HCT116 (cell line): ENCODE measurements at regions of chr19 and their contacts with region 1.

Region 1: GRCh38 chr19:4139614-4140236 is 13.7 kb upstream of the CREB3L3 start:
- DNase-seq: peak; percentile 71
- ATAC-seq: peak; percentile 88
- H3K4me3 ChIP-seq: peak overlapping the region; percentile 32 to 50
- H3K27ac ChIP-seq: peak overlapping the region; percentile 21; the same call in 1 of the 2 replicates
- H3K4me1 ChIP-seq: peaks cover 15 to 40% of the 10 kb centered on the region in 2 experiments
- H3K27me3 ChIP-seq: no peaks in the 10 kb centered on the region
- CTCF ChIP-seq: peak; percentile 76 to 91 (median 91)
- POLR2A ChIP-seq: no peak
- RAD21 ChIP-seq: peak; percentile 69

Region 2: GRCh38 chr19:3984908-3985642 is 154.7 kb before region 1 on chr19 and contains the start of gene EEF2:
- CTCF ChIA-PET with region 1: interaction called, 20 read pairs
- POLR2A ChIA-PET with region 1: no interaction called
- RAD21 ChIA-PET with region 1: no interaction called
- intact Hi-C with region 1: no loop called
- DNase-seq: peak; percentile 68
- ATAC-seq: peak; percentile 26
- H3K4me3 ChIP-seq: peak within 1 kb of the TSS; percentile 95
- H3K27ac ChIP-seq: peak within 1 kb of the TSS; percentile 98
- H3K4me1 ChIP-seq: peaks cover 22 to 47% of the 10 kb centered on the region in 2 experiments
- H3K27me3 ChIP-seq: no peaks in the 10 kb centered on the region
- CTCF ChIP-seq: no peak
- POLR2A ChIP-seq: peak; percentile 99
- RAD21 ChIP-seq: no peak
- total RNA-seq, gene EEF2: 3,796 TPM

Region 3: GRCh38 chr19:4065430-4066175 is 74.1 kb before region 1 on chr19:
- CTCF ChIA-PET with region 1: interaction called, 3 read pairs
- POLR2A ChIA-PET with region 1: interaction called, 3 read pairs
- RAD21 ChIA-PET with region 1: no interaction called
- intact Hi-C with region 1: loop called (anchors 10 kb)
- DNase-seq: peak; percentile 91
- ATAC-seq: peak; percentile 78
- H3K4me3 ChIP-seq: peak overlapping the region; percentile 80 to 82
- H3K27ac ChIP-seq: peak overlapping the region; percentile 96
- H3K4me1 ChIP-seq: peaks cover 34 to 46% of the 10 kb centered on the region in 2 experiments
- H3K27me3 ChIP-seq: no peaks in the 10 kb centered on the region
- CTCF ChIP-seq: no peak
- POLR2A ChIP-seq: no peak
- RAD21 ChIP-seq: no peak

Region 4: GRCh38 chr19:4097501-4097900 is 42.2 kb before region 1 on chr19:
- CTCF ChIA-PET with region 1: no interaction called
- POLR2A ChIA-PET with region 1: no interaction called
- RAD21 ChIA-PET with region 1: no interaction called
- intact Hi-C with region 1: no loop called
- DNase-seq: no peak
- ATAC-seq: no peak
- H3K4me3 ChIP-seq: no peak overlapping the region
- H3K27ac ChIP-seq: no peak overlapping the region
- H3K4me1 ChIP-seq: no peaks in the 10 kb centered on the region
- H3K27me3 ChIP-seq: no peaks in the 10 kb centered on the region
- CTCF ChIP-seq: no peak
- POLR2A ChIP-seq: no peak
- RAD21 ChIP-seq: no peak

Region 5: GRCh38 chr19:4123615-4124568 is 15.8 kb before region 1 on chr19 and contains the start of gene MAP2K2:
- CTCF ChIA-PET with region 1: interaction called, 10 read pairs
- POLR2A ChIA-PET with region 1: no interaction called
- RAD21 ChIA-PET with region 1: no interaction called
- intact Hi-C with region 1: no loop called
- DNase-seq: peak; percentile 79
- ATAC-seq: peak; percentile 93
- H3K4me3 ChIP-seq: peak within 1 kb of the TSS; percentile 84 to 90
- H3K27ac ChIP-seq: peak within 1 kb of the TSS; percentile 92
- H3K4me1 ChIP-seq: peaks cover 9 to 16% of the 10 kb centered on the region in 2 experiments
- H3K27me3 ChIP-seq: no peaks in the 10 kb centered on the region
- CTCF ChIP-seq: 0 out of 6 replicates have a peak, but pooled peaks of 1 of the 3 experiments have one; percentile 10
- POLR2A ChIP-seq: peak; percentile 90
- RAD21 ChIP-seq: no peak
- total RNA-seq, gene MAP2K2: 186 TPM

Region 6: DNA sequence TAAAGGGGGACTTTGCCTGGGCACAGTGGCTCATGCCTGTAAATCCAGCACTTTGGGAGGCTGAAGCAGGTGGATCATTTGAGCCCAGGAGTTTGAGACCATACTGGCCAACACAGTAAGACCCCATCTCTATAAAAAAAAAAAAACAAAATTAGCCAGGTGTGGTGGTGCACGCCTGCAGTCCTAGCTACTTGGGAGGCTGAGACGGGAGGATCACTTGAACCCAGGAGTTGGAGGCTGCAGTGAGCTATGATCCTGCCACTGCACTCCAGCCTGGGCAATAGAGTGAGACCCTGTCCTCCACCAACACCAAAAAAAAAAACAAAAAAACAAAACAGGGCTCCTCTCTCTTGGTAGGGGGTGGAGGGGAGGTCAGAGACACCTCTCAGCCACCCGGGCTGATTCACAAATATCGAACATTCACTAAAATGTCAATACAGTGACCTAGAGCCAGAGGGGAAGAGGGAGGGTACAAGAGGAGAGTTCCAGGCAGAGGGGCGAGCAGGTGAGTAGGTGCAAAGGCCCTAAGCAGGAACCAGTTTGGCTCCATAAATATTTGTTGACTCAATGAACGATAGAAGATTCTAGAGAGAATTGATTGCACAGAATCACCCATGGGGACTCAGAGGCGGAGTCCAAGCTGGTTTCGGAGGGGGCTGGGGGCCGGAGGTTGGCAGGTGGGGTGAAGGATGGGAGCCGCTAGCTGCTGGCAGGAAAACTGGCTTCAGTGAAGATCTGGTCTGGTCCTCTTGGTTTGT is 12.7 kb after region 1 on chr19:
- CTCF ChIA-PET with region 1: interaction called, 13 read pairs
- POLR2A ChIA-PET with region 1: no interaction called
- RAD21 ChIA-PET with region 1: no interaction called
- intact Hi-C with region 1: no loop called
- DNase-seq: no peak
- ATAC-seq: no peak
- H3K4me3 ChIP-seq: no peak overlapping the region
- H3K27ac ChIP-seq: no peak overlapping the region
- H3K4me1 ChIP-seq: peaks cover 0 to 13% of the 10 kb centered on the region in 2 experiments; a peak in 2 of 4 replicates
- H3K27me3 ChIP-seq: no peaks in the 10 kb centered on the region
- CTCF ChIP-seq: no peak
- POLR2A ChIP-seq: no peak
- RAD21 ChIP-seq: no peak

Region 7: GRCh38 chr19:4182084-4182810 is 42.5 kb after region 1 on chr19 and contains the starts of genes ANKRD24 and SIRT6:
- CTCF ChIA-PET with region 1: interaction called, 6 read pairs
- POLR2A ChIA-PET with region 1: no interaction called
- RAD21 ChIA-PET with region 1: no interaction called
- intact Hi-C with region 1: loop called (anchors 5 kb)
- DNase-seq: peak; percentile 89
- ATAC-seq: peak; percentile 76
- H3K4me3 ChIP-seq: peak within 1 kb of the TSS; percentile 80 to 98
- H3K27ac ChIP-seq: peak within 1 kb of the TSS; percentile 77
- H3K4me1 ChIP-seq: peaks cover 10 to 29% of the 10 kb centered on the region in 2 experiments
- H3K27me3 ChIP-seq: no peaks in the 10 kb centered on the region
- CTCF ChIP-seq: no peak
- POLR2A ChIP-seq: peak; percentile 49
- RAD21 ChIP-seq: no peak
- total RNA-seq, gene ANKRD24: 1.7 TPM
- total RNA-seq, gene SIRT6: 36.3 TPM

Region 8: DNA sequence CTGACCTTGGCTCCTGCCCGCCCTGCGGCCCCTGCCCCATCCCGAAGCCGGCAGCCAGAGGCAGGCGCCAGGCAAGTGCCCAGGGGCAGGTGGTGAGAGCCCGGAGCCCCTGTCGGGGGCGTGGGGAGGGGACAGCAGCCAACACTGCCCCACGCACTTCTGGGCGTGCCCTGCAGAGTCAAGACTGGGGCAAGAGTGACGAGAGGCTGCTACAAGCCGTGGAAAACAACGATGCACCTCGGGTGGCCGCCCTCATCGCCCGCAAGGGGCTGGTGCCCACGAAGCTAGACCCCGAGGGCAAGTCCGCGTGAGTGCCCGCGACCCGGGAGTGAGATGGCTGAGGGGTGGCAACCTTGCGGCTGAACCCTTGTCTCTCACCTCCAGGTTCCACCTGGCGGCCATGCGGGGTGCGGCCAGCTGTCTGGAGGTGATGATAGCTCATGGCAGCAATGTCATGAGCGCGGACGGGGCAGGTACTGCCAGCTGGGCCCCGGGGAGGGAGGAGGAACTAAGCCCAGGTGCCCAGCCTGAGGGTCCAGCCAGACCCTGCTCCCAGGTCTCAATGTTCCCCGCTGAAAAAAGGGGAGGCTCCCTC is 60.1 kb after region 1 on chr19:
- CTCF ChIA-PET with region 1: interaction called, 17 read pairs
- POLR2A ChIA-PET with region 1: no interaction called
- RAD21 ChIA-PET with region 1: interaction called in 1 of 2 experiments, 4 read pairs
- intact Hi-C with region 1: loop called (anchors 1 kb)
- DNase-seq: no peak
- ATAC-seq: peak; percentile 87
- H3K4me3 ChIP-seq: peak overlapping the region; percentile 31 to 51
- H3K27ac ChIP-seq: no peak overlapping the region; the same call in 1 of the 2 replicates
- H3K4me1 ChIP-seq: peaks cover 7 to 22% of the 10 kb centered on the region in 2 experiments; a peak in 3 of 4 replicates
- H3K27me3 ChIP-seq: peaks cover 3% of the 10 kb centered on the region; the same call in 1 of the 2 replicates
- CTCF ChIP-seq: peak; percentile 59 to 74 (median 70)
- POLR2A ChIP-seq: no peak
- RAD21 ChIP-seq: peak; percentile 69